Aorta (tissue), 5 donors: ENCODE measurements at regions of chr1 and their contacts with region 1.

Region 1: DNA sequence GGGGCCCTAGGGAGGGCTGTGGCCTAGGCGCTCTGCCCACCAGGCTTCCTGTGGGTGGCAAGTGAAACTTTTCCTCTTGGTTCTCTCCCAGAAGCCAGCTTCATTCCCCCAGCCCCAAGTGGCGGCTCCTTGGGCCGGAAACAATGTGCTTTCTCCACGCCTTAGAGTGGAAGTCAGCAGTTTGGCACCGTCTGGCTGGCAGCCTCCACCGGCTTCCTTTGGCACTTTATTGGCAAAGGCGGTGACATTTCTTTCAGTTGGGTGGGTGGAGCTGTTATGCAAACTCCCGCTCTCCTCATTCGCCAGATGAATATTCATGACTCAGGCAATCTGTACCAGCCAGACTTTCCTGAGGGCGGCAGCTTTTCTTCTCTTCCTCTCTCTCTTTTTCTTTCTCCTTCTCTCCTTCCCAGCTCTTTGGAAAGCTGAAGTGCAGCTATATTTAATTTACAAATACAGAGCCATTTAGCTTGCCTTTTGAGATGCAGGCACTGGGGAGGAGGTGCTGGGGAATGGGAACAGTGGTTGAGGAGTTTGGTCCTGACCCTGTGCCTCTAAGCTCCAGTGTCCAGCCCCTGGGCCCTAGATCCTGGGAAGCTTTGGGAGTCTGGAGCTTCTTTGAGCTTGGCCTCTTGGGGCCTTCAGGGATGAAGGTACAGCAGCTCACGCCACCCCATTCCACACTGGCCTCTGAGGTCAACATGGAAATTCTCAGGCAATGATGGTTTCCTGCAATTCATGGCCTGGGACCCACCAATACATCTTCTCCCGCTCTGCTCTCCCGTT is 67.8 kb upstream of the POU3F1 start:
- DNase-seq: peak; percentile 81 to 83
- ATAC-seq: peak; percentile 71
- H3K4me3 ChIP-seq: no peak overlapping the region
- H3K27ac ChIP-seq: peak overlapping the region; percentile 7 to 71
- H3K4me1 ChIP-seq: no peaks in the 10 kb centered on the region
- H3K27me3 ChIP-seq: no peaks in the 10 kb centered on the region

Region 2: GRCh38 chr1:37995751-37996345 is 118.6 kb before region 1 on chr1:
- intact Hi-C with region 1: loop called in 1 of 2 experiments (anchors 5 kb)
- DNase-seq: peak; percentile 91 to 96
- ATAC-seq: peak; percentile 72
- H3K4me3 ChIP-seq: peak overlapping the region; percentile 14 to 66
- H3K27ac ChIP-seq: peak overlapping the region; percentile 56 to 77
- H3K4me1 ChIP-seq: peaks cover 0 to 6% of the 10 kb centered on the region in 2 donors
- H3K27me3 ChIP-seq: no peaks in the 10 kb centered on the region